AG04449 (cell line): ENCODE measurements at regions of chr3 and their contacts with region 1.

Region 1: DNA sequence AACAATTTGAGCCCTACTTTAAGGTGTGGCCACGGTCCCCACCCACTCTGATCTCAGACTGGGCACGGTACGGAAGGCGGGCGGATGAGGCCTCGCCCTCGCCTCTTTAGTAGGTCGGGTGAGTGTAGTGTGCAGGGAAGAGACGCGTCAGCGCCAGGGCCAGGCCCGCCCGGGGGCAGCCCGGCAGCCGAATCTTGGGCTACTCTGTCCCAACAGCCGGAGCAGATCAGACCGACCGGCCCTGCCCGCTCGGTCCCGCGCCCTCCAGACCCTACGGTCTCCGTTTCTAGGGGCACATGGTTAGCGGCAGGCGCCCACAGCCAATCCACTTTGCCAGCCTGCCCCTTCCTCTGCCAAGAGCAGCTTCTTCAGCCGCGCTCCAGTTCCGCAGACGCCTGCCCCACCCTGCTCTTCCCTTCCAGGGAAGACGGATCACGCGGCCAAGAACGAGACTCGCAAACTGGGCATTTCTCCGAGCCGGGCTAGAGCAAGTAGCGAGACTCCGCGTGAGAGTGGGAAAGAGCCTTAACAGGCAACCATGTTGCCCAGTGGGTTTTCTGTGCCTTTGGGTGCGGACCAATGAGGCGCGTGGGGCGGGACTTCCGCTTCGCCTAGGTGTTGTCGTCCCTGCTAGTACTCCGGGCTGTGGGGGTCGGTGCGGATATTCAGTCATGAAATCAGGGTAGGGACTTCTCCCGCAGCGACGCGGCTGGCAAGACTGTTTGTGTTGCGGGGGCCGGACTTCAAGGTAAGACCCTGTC is at the start of gene RNF13:
- DNase-seq: peak; percentile 78
- H3K4me3 ChIP-seq: peak within 1 kb of the TSS; percentile 79
- CTCF ChIP-seq: no peak

Region 2: DNA sequence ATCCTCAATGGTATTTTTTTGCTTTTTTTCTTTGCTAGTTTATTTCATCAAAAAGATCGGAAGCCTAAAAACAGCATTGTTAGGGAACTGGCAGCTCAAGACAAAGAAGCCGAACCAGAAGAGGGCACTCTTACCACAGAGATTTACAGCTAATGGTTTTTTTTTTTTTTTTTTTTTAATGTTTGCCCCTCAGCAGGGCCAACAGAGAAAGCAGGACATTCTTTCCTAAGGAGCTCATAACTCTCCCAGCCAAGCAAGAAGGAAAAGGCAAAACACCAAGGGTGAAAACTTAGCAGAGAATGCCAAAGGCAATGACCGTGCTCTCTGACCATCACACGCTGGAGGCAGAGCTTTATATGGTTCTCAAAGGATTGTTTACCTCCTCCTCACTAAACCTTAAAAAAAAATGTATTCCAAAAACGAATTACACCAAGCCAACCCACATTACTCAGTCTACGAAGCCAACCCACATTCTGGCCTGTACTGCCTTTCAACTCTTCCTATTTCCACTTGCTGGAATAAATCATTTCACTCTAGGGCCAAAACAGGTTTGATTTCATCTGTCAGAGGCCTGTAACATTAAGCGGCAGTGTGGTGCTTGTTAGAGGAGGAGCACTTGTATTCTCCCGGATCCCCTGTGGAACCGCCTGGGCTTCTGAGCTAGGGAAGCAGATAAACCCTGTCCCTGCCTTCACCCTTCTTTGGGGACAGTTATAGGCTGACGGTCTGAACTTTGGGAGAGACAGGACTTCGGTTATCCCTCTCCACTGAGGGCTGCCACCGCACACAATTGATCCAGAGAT is 857.0 kb before region 1 on chr3:
- CTCF ChIA-PET with region 1: interaction called, 10 read pairs
- POLR2A ChIA-PET with region 1: no interaction called
- DNase-seq: peak; percentile 89
- H3K4me3 ChIP-seq: no peak overlapping the region
- CTCF ChIP-seq: peak; percentile 52

Region 3: DNA sequence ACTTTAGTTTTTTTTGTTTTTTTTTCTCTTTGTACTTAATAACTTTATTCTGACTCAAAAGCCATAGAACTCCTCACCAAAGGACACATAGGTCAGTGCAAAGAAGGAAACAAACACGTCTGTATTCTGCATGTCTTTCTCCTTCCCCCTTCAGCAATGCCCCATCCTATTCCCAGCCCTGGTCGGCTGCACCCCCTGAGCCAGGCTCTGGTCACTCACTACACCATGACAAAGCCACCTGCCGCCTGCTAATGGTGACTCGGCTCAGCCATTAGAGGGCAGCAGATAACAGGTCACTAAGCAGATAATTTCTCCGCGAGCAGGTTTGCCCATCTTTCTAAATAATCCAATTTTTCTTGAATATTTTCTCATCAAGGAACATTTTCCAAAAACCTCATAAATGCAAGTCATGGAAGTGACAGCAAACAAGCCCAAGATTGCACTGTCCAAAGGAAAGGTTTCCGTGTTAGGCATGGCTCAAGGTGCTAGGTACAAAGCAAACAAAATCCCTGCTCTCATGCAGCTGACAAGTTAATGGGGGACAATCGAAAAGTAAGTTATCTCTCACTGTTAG is 300.5 kb before region 1 on chr3:
- CTCF ChIA-PET with region 1: interaction called, 34 read pairs
- POLR2A ChIA-PET with region 1: no interaction called
- DNase-seq: no peak
- H3K4me3 ChIP-seq: no peak overlapping the region
- CTCF ChIP-seq: peak; percentile 75

Region 4: GRCh38 chr3:149706905-149707304 is 105.9 kb before region 1 on chr3:
- CTCF ChIA-PET with region 1: no interaction called
- POLR2A ChIA-PET with region 1: no interaction called
- DNase-seq: no peak
- H3K4me3 ChIP-seq: no peak overlapping the region
- CTCF ChIP-seq: no peak

Region 5: DNA sequence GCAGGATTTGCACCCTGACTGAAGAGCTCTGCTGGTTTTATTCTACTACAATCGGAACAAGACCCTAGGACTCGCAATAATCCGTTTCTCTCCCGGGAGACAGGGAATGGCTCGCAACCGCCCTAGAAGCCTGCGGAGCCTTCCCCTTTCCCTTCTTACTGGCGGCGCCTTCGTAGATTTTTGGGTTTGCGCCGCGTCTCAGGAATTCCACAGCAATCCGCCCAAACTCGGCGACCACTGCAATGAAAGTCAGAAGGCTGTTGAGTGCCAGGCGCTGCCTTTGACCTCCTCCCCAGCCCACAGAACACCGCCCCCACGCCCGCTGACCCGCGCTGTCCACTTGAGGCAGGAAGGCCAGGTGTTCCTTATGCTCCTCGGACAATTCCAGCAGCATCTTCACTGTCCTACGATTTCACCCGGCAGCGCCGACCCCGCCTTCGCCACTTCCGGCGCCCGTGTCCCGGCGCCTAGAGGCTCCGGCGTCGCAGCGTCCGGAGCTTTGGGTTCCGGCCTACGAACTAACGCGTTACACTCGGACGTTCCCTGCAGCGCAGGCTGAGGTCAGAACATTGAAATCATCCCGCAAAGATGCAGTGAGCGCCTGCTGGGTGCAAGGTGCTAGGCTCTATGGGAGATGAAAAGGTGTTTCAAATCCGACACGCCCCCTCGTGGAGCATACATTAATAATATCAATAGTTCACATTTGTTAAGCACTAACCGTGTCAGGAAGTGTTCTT is 60.6 kb before region 1 on chr3 and contains the start of gene COMMD2:
- CTCF ChIA-PET with region 1: interaction called, 29 read pairs
- POLR2A ChIA-PET with region 1: no interaction called
- DNase-seq: no peak
- H3K4me3 ChIP-seq: peak within 1 kb of the TSS; percentile 98
- CTCF ChIP-seq: no peak

Region 6: DNA sequence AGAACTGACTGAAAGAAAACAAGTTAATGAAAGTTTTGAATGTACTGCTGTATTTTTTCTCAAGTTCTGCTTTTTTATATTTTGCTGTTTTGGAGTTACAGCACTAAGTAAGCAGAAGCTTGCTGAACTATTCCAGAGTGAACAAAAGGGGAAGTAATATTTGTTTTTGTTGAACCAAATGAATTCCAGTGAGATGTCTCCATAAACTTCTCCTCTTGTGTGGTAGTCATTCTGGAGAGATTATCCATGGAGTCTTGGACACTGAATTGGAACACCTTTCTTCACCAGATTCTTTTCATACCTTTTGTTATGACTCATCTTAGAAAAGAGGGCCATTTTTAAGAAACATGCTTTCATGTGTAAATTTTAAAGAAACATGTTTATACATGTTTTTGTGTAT is 29.2 kb before region 1 on chr3:
- CTCF ChIA-PET with region 1: interaction called, 14 read pairs
- POLR2A ChIA-PET with region 1: interaction called, 3 read pairs
- DNase-seq: peak; percentile 59
- H3K4me3 ChIP-seq: no peak overlapping the region
- CTCF ChIP-seq: no peak

Region 7: GRCh38 chr3:149801639-149802038 is 11.1 kb before region 1 on chr3:
- CTCF ChIA-PET with region 1: interaction called, 27 read pairs
- POLR2A ChIA-PET with region 1: no interaction called
- DNase-seq: no peak
- H3K4me3 ChIP-seq: no peak overlapping the region
- CTCF ChIP-seq: no peak